ENCODE measurements at regions of chr10 and their contacts with region 1.

Region 1: GRCh38 chr10:80046629-80047441 is 31.6 kb upstream of the TMEM254 start:
- DNase-seq: peak; percentile 43
- ATAC-seq: peak; percentile 98
- H3K4me3 ChIP-seq: no peak overlapping the region
- H3K27ac ChIP-seq: no peak overlapping the region
- H3K4me1 ChIP-seq: no peaks in the 10 kb centered on the region
- H3K27me3 ChIP-seq: no peaks in the 10 kb centered on the region; the same call in 1 of the 2 replicates
- CTCF ChIP-seq: peak; percentile 84 to 98 (median 97); a peak in 5 of 6 replicates
- POLR2A ChIP-seq: no peak
- RAD21 ChIP-seq: peak; percentile 80

Region 2: GRCh38 chr10:80025281-80025680 is 21.6 kb before region 1 on chr10:
- CTCF ChIA-PET with region 1: interaction called, 16 read pairs
- POLR2A ChIA-PET with region 1: interaction called, 6 read pairs
- RAD21 ChIA-PET with region 1: interaction called in 1 of 2 experiments, 4 read pairs
- intact Hi-C with region 1: loop called (anchors 2 kb)
- DNase-seq: no peak
- ATAC-seq: no peak
- H3K4me3 ChIP-seq: no peak overlapping the region
- H3K27ac ChIP-seq: no peak overlapping the region
- H3K4me1 ChIP-seq: no peaks in the 10 kb centered on the region
- H3K27me3 ChIP-seq: no peaks in the 10 kb centered on the region
- CTCF ChIP-seq: no peak
- POLR2A ChIP-seq: no peak
- RAD21 ChIP-seq: no peak

Measured in HCT116 (cell line).